ENCODE measurements at regions of chr1 and their contacts with region 1.

Region 1: GRCh38 chr1:27772933-27773825 is at the start of gene STX12:
- DNase-seq: peak; percentile 98 to 99 (median 99)
- ATAC-seq: peak; percentile 97 to 99 (median 98)
- H3K4me3 ChIP-seq: peak within 1 kb of the TSS; percentile 80 to 100 (median 96)
- H3K27ac ChIP-seq: peak within 1 kb of the TSS; percentile 90 to 98 (median 96)
- H3K4me1 ChIP-seq: peaks cover 5 to 54% (median 19%) of the 10 kb centered on the region in 12 donors
- H3K27me3 ChIP-seq: no peaks in the 10 kb centered on the region
- CTCF ChIP-seq: no peak
- POLR2A ChIP-seq: peak in 1 of 2 donors; percentile 92
- total RNA-seq, gene STX12: 15.3 to 46.8 (median 26.5) TPM

Region 2: DNA sequence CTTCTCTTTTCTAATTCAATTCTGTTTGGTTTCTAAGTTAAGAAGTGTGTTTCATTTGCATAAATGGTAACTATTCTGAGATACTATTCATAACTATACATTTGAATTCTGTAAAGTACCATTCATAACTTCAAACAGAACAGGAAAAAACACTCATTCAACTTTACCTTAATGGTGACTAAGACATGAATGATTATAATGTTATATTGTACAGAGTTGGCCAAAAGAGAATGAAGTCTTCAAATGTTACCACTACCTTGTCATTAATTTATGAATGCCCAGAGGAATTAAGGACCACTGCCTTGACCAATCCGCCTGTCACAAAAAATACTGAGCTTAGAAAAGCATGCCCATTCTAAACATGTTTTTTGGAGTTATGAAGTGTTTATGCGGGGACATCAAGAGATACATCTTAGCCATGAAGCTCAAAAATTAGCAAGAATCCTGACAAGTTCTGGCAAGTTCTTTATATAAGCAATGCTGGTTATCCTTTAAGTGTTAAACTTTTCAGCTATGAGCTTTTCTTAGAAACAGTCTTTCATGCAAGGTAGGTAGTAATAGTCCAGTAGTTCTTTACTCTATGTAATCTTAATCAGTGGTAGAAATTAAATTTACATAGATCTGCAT is 291.1 kb before region 1 on chr1:
- intact Hi-C with region 1: no loop called
- DNase-seq: no peak
- ATAC-seq: no peak
- H3K4me3 ChIP-seq: no peak overlapping the region
- H3K27ac ChIP-seq: no peak overlapping the region
- H3K4me1 ChIP-seq: peaks cover 2 to 88% (median 49%) of the 10 kb centered on the region in 12 donors
- H3K27me3 ChIP-seq: no peaks in the 10 kb centered on the region
- CTCF ChIP-seq: no peak
- POLR2A ChIP-seq: no peak

Region 3: GRCh38 chr1:27671964-27672749 is 101.0 kb before region 1 on chr1 and contains the start of gene IFI6:
- intact Hi-C with region 1: loop called in 1 of 10 experiments (anchors 2 kb)
- DNase-seq: peak; percentile 85 to 91 (median 89)
- ATAC-seq: peak; percentile 95 to 99 (median 98)
- H3K4me3 ChIP-seq: peak within 1 kb of the TSS; percentile 38 to 94 (median 61)
- H3K27ac ChIP-seq: peak within 1 kb of the TSS; percentile 43 to 92 (median 86)
- H3K4me1 ChIP-seq: peaks cover 0 to 55% (median 23%) of the 10 kb centered on the region in 12 donors
- H3K27me3 ChIP-seq: no peaks in the 10 kb centered on the region
- CTCF ChIP-seq: peak in 11 of 12 donors; percentile 5 to 62 (median 42)
- POLR2A ChIP-seq: peak in 1 of 2 donors; percentile 61
- total RNA-seq, gene IFI6: 18.3 to 140 (median 70.2) TPM

Region 4: GRCh38 chr1:27725374-27726173 is 47.6 kb before region 1 on chr1 and contains the start of gene FAM76A:
- intact Hi-C with region 1: loop called in 3 of 10 experiments (anchors 2 to 5 kb)
- DNase-seq: peak; percentile 99 to 100 (median 100)
- ATAC-seq: peak; percentile 98 to 99 (median 99)
- H3K4me3 ChIP-seq: peak within 1 kb of the TSS; percentile 71 to 100 (median 92)
- H3K27ac ChIP-seq: peak within 1 kb of the TSS; percentile 73 to 98 (median 93)
- H3K4me1 ChIP-seq: peaks cover 0 to 23% (median 17%) of the 10 kb centered on the region in 12 donors
- H3K27me3 ChIP-seq: no peaks in the 10 kb centered on the region
- CTCF ChIP-seq: peak; percentile 29 to 85 (median 52)
- POLR2A ChIP-seq: peak; percentile 41 to 91
- total RNA-seq, gene FAM76A: 9.7 to 24.0 (median 13.5) TPM

Region 5: GRCh38 chr1:27830621-27831424 is 57.6 kb after region 1 on chr1 and contains the start of gene PPP1R8:
- intact Hi-C with region 1: loop called in 1 of 10 experiments (anchors 5 kb)
- DNase-seq: peak; percentile 92 to 96 (median 95)
- ATAC-seq: peak; percentile 99 to 100 (median 100)
- H3K4me3 ChIP-seq: peak within 1 kb of the TSS; percentile 66 to 99 (median 92)
- H3K27ac ChIP-seq: peak within 1 kb of the TSS; percentile 73 to 94 (median 90)
- H3K4me1 ChIP-seq: peaks cover 8 to 34% (median 19%) of the 10 kb centered on the region in 12 donors
- H3K27me3 ChIP-seq: no peaks in the 10 kb centered on the region
- CTCF ChIP-seq: peak in 1 of 12 donors; percentile 17
- POLR2A ChIP-seq: peak in 1 of 2 donors; percentile 73
- total RNA-seq, gene PPP1R8: 21.4 to 31.8 (median 25.1) TPM

Region 6: DNA sequence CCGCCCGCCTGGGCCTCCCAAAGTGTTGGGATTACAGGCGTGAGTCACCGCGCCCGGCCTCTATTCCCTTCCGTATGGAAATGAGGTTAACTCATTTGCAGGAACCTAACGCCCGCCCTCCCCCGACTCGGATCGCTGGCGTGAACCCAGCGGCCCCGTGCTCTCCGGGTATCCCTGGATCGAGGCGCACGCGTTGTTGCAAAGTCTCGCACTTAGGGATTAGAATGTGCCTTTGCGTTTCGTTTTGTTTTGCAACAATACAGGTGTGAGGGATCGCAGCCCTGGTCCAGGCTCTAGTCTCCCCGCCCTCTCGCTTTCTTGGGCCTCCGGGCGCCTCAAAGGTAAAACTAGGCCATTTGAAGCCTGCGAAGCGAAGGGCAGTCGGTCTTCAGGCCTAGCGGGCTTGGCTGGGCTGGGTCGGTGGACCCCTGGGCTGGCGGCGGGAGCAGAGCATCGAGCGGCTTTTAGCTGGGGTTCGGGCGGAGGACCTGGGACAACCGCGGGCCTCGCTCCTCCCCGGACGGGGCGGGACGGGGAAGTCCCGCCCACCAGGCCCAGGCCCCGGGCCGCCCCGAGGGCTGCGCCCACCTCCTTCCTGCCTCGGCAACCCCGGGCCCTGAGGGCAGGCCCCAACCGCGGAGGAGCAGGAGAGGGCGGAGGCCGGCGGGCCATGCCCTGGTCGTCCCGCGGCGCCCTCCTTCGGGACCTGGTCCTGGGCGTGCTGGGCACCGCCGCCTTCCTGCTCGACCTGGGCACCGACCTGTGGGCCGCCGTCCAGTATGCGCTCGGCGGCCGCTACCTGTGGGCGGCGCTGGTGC is 186.4 kb after region 1 on chr1 and contains the start of gene XKR8:
- intact Hi-C with region 1: no loop called
- DNase-seq: peak; percentile 85 to 94 (median 87)
- ATAC-seq: peak; percentile 82 to 96 (median 96)
- H3K4me3 ChIP-seq: peak within 1 kb of the TSS; percentile 32 to 93 (median 74)
- H3K27ac ChIP-seq: peak within 1 kb of the TSS; percentile 33 to 96 (median 91)
- H3K4me1 ChIP-seq: peaks cover 0 to 34% (median 18%) of the 10 kb centered on the region in 12 donors
- H3K27me3 ChIP-seq: no peaks in the 10 kb centered on the region
- CTCF ChIP-seq: peak in 9 of 12 donors; percentile 7 to 58 (median 37)
- POLR2A ChIP-seq: peak in 1 of 2 donors; percentile 71
- total RNA-seq, gene XKR8: 3.3 to 8.1 (median 4.5) TPM